Activated B cell treated with CpG ODN at 0.5 μM for 24 hours (primary cell): ENCODE measurements at regions of chr3 and their contacts with region 1.

Region 1: DNA sequence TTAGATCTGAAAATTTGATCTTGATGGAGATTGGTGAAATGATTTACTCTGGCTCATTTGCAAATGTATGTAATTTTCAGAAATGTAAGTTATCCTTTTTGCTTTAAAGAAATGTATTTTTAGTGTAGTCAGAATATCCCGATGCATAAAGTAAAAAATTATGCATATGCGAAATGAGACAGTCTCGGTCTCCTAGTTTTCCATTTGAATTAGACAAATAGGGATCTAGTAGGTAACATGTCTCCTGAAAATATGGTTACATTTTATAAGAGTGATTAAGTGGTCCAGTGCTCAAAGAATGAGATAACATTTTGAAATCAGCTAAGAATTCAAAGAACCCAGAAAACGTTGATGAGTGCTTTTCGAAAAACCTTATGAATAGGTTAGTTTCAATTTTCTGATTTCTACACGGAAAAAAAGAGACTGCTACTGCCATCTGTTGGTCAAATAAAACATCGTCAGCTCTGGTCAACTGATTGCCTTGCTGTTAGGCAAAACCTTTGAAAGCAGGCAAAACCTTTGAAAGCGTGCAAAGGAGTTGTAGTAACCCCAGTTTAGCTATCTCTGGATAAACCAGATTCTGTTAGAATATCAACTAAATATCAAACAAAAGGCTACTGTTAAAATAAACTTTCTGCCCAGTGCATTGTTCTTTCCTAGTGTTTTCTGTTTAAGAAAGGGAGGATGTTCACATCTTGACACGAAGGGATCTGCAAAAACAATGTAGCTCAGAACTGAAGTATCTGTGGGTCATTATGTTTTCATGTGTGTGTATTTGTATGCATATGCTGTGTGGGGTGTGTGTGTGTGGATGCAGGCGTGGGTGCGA is 59.3 kb upstream of the CHMP2B start:
- DNase-seq: no peak
- ATAC-seq: peak; percentile 60
- H3K4me3 Mint-ChIP-seq: peak overlapping the region; percentile 50
- H3K27ac Mint-ChIP-seq: no peak overlapping the region
- H3K4me1 Mint-ChIP-seq: no peaks in the 10 kb centered on the region
- H3K27me3 Mint-ChIP-seq: peaks cover 13% of the 10 kb centered on the region
- CTCF ChIP-seq: no peak

Region 2: GRCh38 chr3:86702381-86702958 is 465.4 kb before region 1 on chr3:
- CTCF ChIA-PET with region 1: no interaction called
- POLR2A ChIA-PET with region 1: no interaction called
- intact Hi-C with region 1: loop called (anchors 1 kb)
- DNase-seq: no peak
- ATAC-seq: no peak
- H3K4me3 Mint-ChIP-seq: no peak overlapping the region
- H3K27ac Mint-ChIP-seq: no peak overlapping the region
- H3K4me1 Mint-ChIP-seq: no peaks in the 10 kb centered on the region
- H3K27me3 Mint-ChIP-seq: no peaks in the 10 kb centered on the region
- CTCF ChIP-seq: peak; percentile 25

Region 3: GRCh38 chr3:86774082-86774691 is 393.7 kb before region 1 on chr3:
- CTCF ChIA-PET with region 1: no interaction called
- POLR2A ChIA-PET with region 1: no interaction called
- intact Hi-C with region 1: loop called (anchors 1 kb)
- DNase-seq: no peak
- ATAC-seq: no peak
- H3K4me3 Mint-ChIP-seq: no peak overlapping the region
- H3K27ac Mint-ChIP-seq: no peak overlapping the region
- H3K4me1 Mint-ChIP-seq: no peaks in the 10 kb centered on the region
- H3K27me3 Mint-ChIP-seq: no peaks in the 10 kb centered on the region
- CTCF ChIP-seq: no peak

Region 4: DNA sequence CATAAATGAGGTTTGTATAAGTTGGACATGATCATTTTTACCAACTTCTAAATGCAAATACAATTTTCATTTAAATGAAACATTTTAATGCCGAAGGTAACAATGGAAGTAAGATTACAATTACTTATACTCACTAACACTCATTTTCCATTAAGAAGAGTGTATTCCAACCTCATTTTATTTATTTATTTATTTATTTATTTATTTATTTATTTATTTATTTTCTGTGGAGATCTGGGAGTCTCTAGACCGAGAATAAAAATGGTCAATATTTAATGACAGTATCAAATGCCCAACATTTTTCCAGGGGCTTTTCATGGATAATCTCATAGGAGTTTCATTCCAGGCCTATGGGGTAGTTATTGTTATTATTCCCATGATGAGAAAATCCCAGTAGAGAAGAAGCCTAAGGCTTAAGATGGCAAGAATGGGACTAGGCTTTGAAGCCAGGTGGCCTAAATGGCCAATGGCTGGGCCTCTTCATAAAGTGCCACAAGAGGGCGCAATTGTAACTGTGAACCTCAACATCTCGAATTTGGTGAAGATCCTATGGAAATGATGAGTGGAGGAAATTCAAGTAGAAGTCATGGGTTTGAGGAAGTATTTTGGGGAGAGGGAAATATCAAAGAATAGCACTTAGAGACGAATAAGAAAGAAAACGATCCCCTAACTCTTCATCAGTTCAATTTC is 198.2 kb before region 1 on chr3:
- CTCF ChIA-PET with region 1: interaction called, 3 read pairs
- POLR2A ChIA-PET with region 1: no interaction called
- intact Hi-C with region 1: loop called (anchors 2 kb)
- DNase-seq: no peak
- ATAC-seq: no peak
- H3K4me3 Mint-ChIP-seq: no peak overlapping the region
- H3K27ac Mint-ChIP-seq: no peak overlapping the region
- H3K4me1 Mint-ChIP-seq: no peaks in the 10 kb centered on the region
- H3K27me3 Mint-ChIP-seq: no peaks in the 10 kb centered on the region
- CTCF ChIP-seq: no peak

Region 5: DNA sequence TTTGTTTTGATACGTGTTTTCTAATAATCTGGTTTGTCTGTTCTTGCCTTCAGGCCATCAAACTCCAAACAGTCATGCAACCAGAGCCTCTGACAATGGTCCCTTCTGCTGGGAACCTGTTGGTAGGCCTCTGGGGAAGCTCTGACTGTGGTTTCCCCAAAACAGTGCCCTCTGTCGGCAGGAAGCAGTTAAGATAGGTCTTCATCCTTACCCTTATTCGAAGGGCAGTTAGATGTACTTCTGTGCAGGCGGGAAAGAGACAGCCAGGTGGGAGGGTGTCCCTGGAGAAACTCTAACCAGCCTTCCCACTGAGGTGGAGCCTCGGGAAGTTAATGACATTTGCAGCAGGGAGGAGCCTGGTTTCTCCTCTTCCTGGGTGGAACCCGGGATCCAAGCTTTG is 22.3 kb before region 1 on chr3:
- CTCF ChIA-PET with region 1: no interaction called
- POLR2A ChIA-PET with region 1: no interaction called
- intact Hi-C with region 1: no loop called
- DNase-seq: no peak
- ATAC-seq: no peak
- H3K4me3 Mint-ChIP-seq: no peak overlapping the region
- H3K27ac Mint-ChIP-seq: no peak overlapping the region
- H3K4me1 Mint-ChIP-seq: no peaks in the 10 kb centered on the region
- H3K27me3 Mint-ChIP-seq: no peaks in the 10 kb centered on the region
- CTCF ChIP-seq: no peak